Activated T-helper 1 cell treated with anti-CD3 and anti-CD28 coated beads, Interleukin-12 subunit alpha, Interleukin-12 subunit beta, Interleukin-2, Interleukin-4 antibody, amounts not matched to agents 30 ng/mL and 10 ng/mL and 1 ng/mL, durations not matched to agents 14 hours and 24 hours and 36 hours (primary cell): ENCODE measurements at regions of chr1 and their contacts with region 1.

Region 1: DNA sequence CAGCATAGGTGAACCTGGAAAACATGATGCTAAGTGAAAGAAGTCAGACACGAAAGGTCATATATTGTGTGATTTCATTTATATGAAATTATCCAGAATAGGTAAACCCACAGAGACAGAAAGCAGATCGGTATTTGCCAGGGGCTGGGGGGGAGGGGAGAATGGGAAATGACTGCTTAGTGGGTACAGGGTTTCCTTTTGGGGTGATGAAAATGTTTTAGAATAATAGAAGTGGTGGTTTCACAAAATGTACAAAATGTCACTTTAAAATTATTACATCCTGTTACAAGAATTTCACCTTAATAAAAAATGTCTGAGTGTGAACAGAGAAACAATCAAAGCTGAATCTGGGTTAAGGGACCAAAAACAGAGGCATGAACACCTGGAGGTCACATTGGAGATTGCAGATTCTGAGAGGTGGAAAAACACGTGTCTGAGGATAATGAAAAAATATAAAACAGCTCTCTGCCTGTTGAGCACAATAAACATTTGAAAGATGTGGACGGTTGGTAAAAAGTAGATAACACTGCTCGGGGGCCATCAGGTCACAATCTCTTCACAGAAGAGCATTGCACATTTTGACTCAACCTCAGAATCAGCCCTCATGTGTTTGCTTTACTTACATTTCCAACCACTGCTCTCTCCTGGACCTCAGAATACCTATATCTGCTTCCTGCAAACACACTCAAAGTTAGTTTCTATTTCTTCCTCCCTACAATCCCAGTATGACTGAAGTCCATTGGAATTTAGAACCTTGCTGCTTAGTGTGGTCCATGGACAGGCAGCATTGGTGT is 3.2 kb downstream of the SLAMF6 start:
- DNase-seq: peak; percentile 24
- H3K4me3 Mint-ChIP-seq: peak overlapping the region; percentile 92
- H3K27ac Mint-ChIP-seq: peak overlapping the region; percentile 90
- H3K4me1 Mint-ChIP-seq: peaks cover 88% of the 10 kb centered on the region
- H3K27me3 Mint-ChIP-seq: no peaks in the 10 kb centered on the region

Region 2: GRCh38 chr1:160428655-160429054 is 91.2 kb before region 1 on chr1:
- intact Hi-C with region 1: loop called (anchors 1 kb)
- DNase-seq: peak; percentile 15
- H3K4me3 Mint-ChIP-seq: no peak overlapping the region
- H3K27ac Mint-ChIP-seq: peak overlapping the region; percentile 91
- H3K4me1 Mint-ChIP-seq: peaks cover 59% of the 10 kb centered on the region
- H3K27me3 Mint-ChIP-seq: no peaks in the 10 kb centered on the region

Region 3: GRCh38 chr1:160460683-160461287 is 59.1 kb before region 1 on chr1:
- intact Hi-C with region 1: loop called (anchors 1 kb)
- DNase-seq: no peak
- H3K4me3 Mint-ChIP-seq: peak overlapping the region; percentile 56
- H3K27ac Mint-ChIP-seq: peak overlapping the region; percentile 99
- H3K4me1 Mint-ChIP-seq: peaks cover 87% of the 10 kb centered on the region
- H3K27me3 Mint-ChIP-seq: no peaks in the 10 kb centered on the region

Region 4: DNA sequence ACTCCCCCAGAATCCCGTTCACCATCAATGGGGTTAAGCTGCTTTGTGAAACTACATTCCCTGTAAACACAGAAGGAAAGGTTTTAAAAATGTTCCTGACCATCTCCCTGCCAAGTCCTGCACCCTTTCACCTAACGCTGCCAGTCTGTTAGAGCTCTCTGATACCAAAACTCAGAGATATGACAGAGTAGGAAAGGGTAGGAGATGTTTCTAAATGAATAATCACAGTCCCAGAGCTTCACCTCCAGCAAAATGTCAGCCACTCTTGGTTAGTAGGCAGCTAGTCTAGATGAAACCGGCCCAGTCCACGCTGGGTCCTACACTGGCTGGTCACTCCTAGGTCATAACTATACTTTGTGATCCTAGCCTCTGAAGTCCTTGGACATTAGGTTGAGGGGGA is 23.5 kb before region 1 on chr1:
- intact Hi-C with region 1: loop called (anchors 1 kb)
- DNase-seq: no peak
- H3K4me3 Mint-ChIP-seq: no peak overlapping the region
- H3K27ac Mint-ChIP-seq: no peak overlapping the region
- H3K4me1 Mint-ChIP-seq: peaks cover 22% of the 10 kb centered on the region
- H3K27me3 Mint-ChIP-seq: no peaks in the 10 kb centered on the region

Region 5: GRCh38 chr1:160539990-160540858 is 20.4 kb after region 1 on chr1:
- intact Hi-C with region 1: loop called (anchors 1 kb)
- DNase-seq: peak; percentile 64
- H3K4me3 Mint-ChIP-seq: peak overlapping the region; percentile 38
- H3K27ac Mint-ChIP-seq: peak overlapping the region; percentile 90
- H3K4me1 Mint-ChIP-seq: peaks cover 46% of the 10 kb centered on the region
- H3K27me3 Mint-ChIP-seq: no peaks in the 10 kb centered on the region

Region 6: DNA sequence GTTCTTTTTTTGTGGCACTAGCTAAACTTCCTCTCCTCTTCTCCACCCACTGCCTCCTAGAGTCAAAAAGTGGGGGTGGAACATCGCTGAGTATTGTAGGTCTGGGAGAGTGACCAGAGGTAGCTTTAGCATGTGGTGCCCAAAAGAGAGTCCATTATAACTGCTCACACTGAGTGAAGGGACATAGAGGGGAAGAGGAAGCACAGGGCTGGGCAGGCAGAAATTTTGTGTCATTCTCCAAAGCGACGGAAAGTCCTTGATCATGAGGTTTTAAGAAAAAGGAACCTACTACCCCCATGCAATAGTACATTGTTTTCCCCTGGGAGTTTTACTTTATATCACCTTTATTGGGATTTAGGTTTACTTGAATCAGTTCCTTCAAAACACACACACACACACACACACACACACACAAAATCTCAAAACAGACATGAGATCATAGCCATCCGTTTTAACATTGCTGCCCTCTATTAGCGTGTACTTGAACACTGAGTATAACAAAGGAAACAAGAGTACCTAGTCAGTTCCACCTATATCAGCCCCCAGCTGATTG is 55.3 kb after region 1 on chr1:
- intact Hi-C with region 1: loop called (anchors 1 kb)
- DNase-seq: no peak
- H3K4me3 Mint-ChIP-seq: peak overlapping the region; percentile 79
- H3K27ac Mint-ChIP-seq: peak overlapping the region; percentile 84
- H3K4me1 Mint-ChIP-seq: peaks cover 96% of the 10 kb centered on the region
- H3K27me3 Mint-ChIP-seq: no peaks in the 10 kb centered on the region

Region 7: DNA sequence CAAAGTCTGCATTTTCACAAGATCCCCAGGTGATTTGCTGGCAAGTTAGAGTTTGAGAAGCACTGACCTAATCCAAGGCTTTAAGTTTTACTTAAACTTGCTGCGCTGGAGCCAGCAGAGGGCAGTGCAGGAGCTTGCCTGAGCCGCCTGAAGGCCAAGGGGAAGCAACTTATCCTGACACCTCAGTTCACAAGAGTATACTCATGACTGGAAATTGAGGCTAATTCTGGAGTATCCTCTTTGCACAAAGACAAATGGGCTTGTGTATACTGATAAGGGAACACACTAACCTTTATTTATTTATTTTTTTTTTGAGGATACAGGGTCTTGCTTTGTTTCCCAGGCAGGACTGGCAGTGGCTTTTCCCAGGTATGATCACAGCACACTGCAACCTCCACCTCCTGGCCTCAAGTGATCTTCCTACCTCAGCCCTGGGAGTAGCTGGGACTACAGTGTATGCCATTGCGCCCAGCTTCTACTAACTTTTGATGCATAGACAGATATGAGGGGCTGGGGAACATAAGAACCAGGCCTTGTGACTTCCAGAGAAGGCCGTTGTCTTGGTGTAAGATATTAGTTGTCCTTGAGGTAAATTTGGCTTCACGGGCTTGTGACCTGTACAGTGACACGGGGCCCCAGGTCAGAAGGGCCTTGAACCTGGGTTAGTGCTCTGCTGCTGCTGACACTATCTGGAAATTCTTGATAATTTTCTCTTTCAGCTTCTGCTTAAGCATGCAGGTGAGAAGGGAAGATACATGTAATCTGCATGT is 156.0 kb after region 1 on chr1:
- intact Hi-C with region 1: loop called (anchors 2 kb)
- DNase-seq: peak; percentile 68
- H3K4me3 Mint-ChIP-seq: peak overlapping the region; percentile 19
- H3K27ac Mint-ChIP-seq: peak overlapping the region; percentile 42
- H3K4me1 Mint-ChIP-seq: peaks cover 47% of the 10 kb centered on the region
- H3K27me3 Mint-ChIP-seq: no peaks in the 10 kb centered on the region